CD4-positive, alpha-beta memory T cell (primary cell): ENCODE measurements at regions of chr11 and their contacts with region 1.

Region 1: GRCh38 chr11:129785383-129786111 is 30.1 kb upstream of the TMEM45B start:
- DNase-seq: peak in 4 of 5 donors; percentile 12 to 33 (median 25)
- H3K4me3 ChIP-seq: no peak overlapping the region
- H3K4me3 Mint-ChIP-seq: no peak overlapping the region
- H3K27ac ChIP-seq: no peak overlapping the region
- H3K27ac Mint-ChIP-seq: peak overlapping the region in 3 of 7 donors; percentile 8 to 51 (median 47)
- H3K4me1 ChIP-seq: peaks cover 10% of the 10 kb centered on the region
- H3K4me1 Mint-ChIP-seq: peaks cover 7 to 10% (median 9%) of the 10 kb centered on the region in 4 donors
- H3K27me3 ChIP-seq: no peaks in the 10 kb centered on the region
- H3K27me3 Mint-ChIP-seq: no peaks in the 10 kb centered on the region

Region 2: GRCh38 chr11:129853518-129854236 is 68.1 kb after region 1 on chr11:
- CTCF ChIA-PET with region 1: interaction called, 3 read pairs
- POLR2A ChIA-PET with region 1: interaction called, 4 read pairs
- intact Hi-C with region 1: loop called (anchors 5 kb)
- DNase-seq: peak; percentile 88 to 93 (median 90)
- H3K4me3 ChIP-seq: peak overlapping the region in 1 of 2 donors; percentile 28
- H3K4me3 Mint-ChIP-seq: peak overlapping the region; percentile 73 to 89 (median 82)
- H3K27ac ChIP-seq: peak overlapping the region; percentile 51
- H3K27ac Mint-ChIP-seq: peak overlapping the region; percentile 94 to 100 (median 99)
- H3K4me1 ChIP-seq: peaks cover 42% of the 10 kb centered on the region
- H3K4me1 Mint-ChIP-seq: peaks cover 38 to 62% (median 40%) of the 10 kb centered on the region in 4 donors
- H3K27me3 ChIP-seq: no peaks in the 10 kb centered on the region
- H3K27me3 Mint-ChIP-seq: no peaks in the 10 kb centered on the region

Region 3: GRCh38 chr11:129881570-129882170 is 96.1 kb after region 1 on chr11:
- CTCF ChIA-PET with region 1: interaction called, 12 read pairs
- POLR2A ChIA-PET with region 1: no interaction called
- intact Hi-C with region 1: no loop called
- DNase-seq: peak in 3 of 5 donors; percentile 17 to 39 (median 33)
- H3K4me3 ChIP-seq: no peak overlapping the region
- H3K4me3 Mint-ChIP-seq: no peak overlapping the region
- H3K27ac ChIP-seq: no peak overlapping the region
- H3K27ac Mint-ChIP-seq: peak overlapping the region in 2 of 7 donors; percentile 22 to 89
- H3K4me1 ChIP-seq: no peaks in the 10 kb centered on the region
- H3K4me1 Mint-ChIP-seq: peaks cover 0 to 10% (median 5%) of the 10 kb centered on the region in 4 donors
- H3K27me3 ChIP-seq: no peaks in the 10 kb centered on the region
- H3K27me3 Mint-ChIP-seq: no peaks in the 10 kb centered on the region

Region 4: DNA sequence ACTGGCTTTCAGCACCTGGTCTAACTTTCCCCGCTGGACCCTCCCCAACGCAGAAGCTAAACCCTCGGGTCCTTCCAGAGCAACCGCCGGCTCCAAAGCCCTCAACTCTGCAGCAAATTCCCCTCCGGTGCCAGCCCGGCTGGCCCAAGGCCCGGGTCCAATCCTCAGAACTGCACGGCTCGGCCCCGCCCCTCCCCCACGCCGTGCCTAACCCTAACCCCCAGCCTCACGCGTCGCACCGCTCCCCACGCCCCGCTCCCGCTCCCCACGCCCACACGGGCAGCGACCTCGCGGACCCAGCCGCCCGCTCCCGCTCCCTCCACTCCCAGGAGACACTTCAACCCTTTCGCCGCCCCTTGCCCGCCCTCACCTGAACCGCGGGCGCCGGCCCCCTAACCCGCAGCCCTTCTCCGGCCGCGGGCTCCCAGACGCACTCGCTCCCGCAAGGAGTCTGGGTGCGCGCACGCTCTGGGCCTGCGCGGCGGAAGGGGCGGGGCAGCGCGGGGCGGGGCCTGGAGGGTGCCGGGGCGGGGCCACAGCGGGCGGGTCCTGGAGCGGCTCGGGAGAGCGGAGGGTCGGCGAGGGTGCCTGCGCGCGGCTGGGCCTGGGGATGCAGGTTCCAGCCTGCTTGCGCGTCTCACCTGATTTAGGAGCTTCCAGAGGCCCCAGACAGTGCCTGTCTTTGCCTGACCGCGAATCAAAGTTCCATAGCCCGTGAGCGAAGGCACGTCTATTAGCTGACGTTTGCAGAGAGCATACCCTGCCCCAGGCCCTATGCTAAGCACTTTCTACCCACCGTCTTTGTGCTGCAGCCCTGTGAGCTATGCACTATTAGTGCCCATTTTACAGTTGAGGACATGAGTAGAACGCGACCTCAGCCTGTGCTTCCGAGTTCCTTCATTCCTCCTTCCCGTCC is 109.8 kb after region 1 on chr11 and contains the start of gene NFRKB:
- CTCF ChIA-PET with region 1: interaction called, 9 read pairs
- POLR2A ChIA-PET with region 1: interaction called, 3 read pairs
- intact Hi-C with region 1: loop called (anchors 5 kb)
- DNase-seq: peak; percentile 81 to 89 (median 84)
- H3K4me3 ChIP-seq: peak within 1 kb of the TSS; percentile 61 to 84
- H3K4me3 Mint-ChIP-seq: peak within 1 kb of the TSS; percentile 92 to 94 (median 94)
- H3K27ac ChIP-seq: peak within 1 kb of the TSS; percentile 81
- H3K27ac Mint-ChIP-seq: peak within 1 kb of the TSS; percentile 82 to 93 (median 90)
- H3K4me1 ChIP-seq: peaks cover 29% of the 10 kb centered on the region
- H3K4me1 Mint-ChIP-seq: peaks cover 20 to 51% (median 33%) of the 10 kb centered on the region in 4 donors
- H3K27me3 ChIP-seq: no peaks in the 10 kb centered on the region
- H3K27me3 Mint-ChIP-seq: no peaks in the 10 kb centered on the region
- total RNA-seq, gene NFRKB: 91.9 to 94.9 TPM

Region 5: GRCh38 chr11:129917231-129917630 is 131.7 kb after region 1 on chr11:
- CTCF ChIA-PET with region 1: interaction called, 17 read pairs
- POLR2A ChIA-PET with region 1: interaction called, 3 read pairs
- intact Hi-C with region 1: loop called (anchors 2 kb)
- DNase-seq: no peak
- H3K4me3 ChIP-seq: no peak overlapping the region
- H3K4me3 Mint-ChIP-seq: no peak overlapping the region
- H3K27ac ChIP-seq: no peak overlapping the region
- H3K27ac Mint-ChIP-seq: peak overlapping the region in 1 of 7 donors; percentile 51
- H3K4me1 ChIP-seq: no peaks in the 10 kb centered on the region
- H3K4me1 Mint-ChIP-seq: no peaks in the 10 kb centered on the region
- H3K27me3 ChIP-seq: no peaks in the 10 kb centered on the region
- H3K27me3 Mint-ChIP-seq: no peaks in the 10 kb centered on the region

Region 6: GRCh38 chr11:129922674-129923073 is 137.1 kb after region 1 on chr11:
- CTCF ChIA-PET with region 1: interaction called, 17 read pairs
- POLR2A ChIA-PET with region 1: no interaction called
- intact Hi-C with region 1: loop called (anchors 2 kb)
- DNase-seq: no peak
- H3K4me3 ChIP-seq: no peak overlapping the region
- H3K4me3 Mint-ChIP-seq: no peak overlapping the region
- H3K27ac ChIP-seq: no peak overlapping the region
- H3K27ac Mint-ChIP-seq: peak overlapping the region in 2 of 7 donors; percentile 1 to 2
- H3K4me1 ChIP-seq: peaks cover 10% of the 10 kb centered on the region
- H3K4me1 Mint-ChIP-seq: peaks cover 3 to 5% (median 4%) of the 10 kb centered on the region in 4 donors
- H3K27me3 ChIP-seq: no peaks in the 10 kb centered on the region
- H3K27me3 Mint-ChIP-seq: no peaks in the 10 kb centered on the region

Region 7: DNA sequence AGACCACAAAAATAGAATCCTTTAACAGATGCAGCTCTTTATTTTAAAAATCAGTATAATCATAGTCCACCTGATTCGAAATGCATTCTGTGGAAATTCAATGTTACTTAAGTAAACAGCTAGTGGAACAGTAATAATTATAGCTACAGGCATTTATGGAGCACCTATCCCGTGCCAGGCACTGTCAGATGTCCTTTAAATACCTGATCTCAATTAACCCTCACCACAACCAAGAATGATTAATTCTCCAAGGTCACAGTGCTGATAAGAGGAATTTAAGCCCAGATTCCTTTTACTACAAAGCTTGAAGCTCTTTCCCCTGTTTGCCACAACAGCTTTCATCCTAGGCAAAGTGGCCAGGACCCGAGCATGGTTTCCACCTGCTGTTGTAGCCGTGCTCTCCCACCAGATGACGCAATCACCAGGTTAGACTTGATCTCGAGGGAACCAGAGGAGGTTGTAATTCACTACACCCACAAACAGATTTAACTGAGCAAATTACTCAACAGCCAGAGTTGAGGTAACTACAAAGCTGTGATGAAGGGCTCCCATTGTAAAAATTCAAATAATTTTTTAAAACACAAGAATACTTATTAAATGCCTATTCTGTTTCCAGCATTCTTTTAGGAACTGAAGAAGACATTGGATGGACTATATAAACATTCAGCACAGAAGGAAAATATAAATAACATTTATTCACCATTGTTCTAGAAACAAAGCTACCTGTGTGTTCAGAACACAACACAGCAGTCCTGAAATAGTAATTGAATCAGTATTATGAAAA is 206.8 kb after region 1 on chr11:
- CTCF ChIA-PET with region 1: interaction called, 13 read pairs
- POLR2A ChIA-PET with region 1: no interaction called
- intact Hi-C with region 1: no loop called
- DNase-seq: peak; percentile 20 to 53 (median 27)
- H3K4me3 ChIP-seq: no peak overlapping the region
- H3K4me3 Mint-ChIP-seq: no peak overlapping the region
- H3K27ac ChIP-seq: no peak overlapping the region
- H3K27ac Mint-ChIP-seq: peak overlapping the region in 2 of 7 donors; percentile 27 to 52
- H3K4me1 ChIP-seq: no peaks in the 10 kb centered on the region
- H3K4me1 Mint-ChIP-seq: peaks cover 7 to 15% (median 12%) of the 10 kb centered on the region in 4 donors
- H3K27me3 ChIP-seq: no peaks in the 10 kb centered on the region
- H3K27me3 Mint-ChIP-seq: no peaks in the 10 kb centered on the region